ENCODE measurements at regions of chr17 and their contacts with region 1.

Region 1: DNA sequence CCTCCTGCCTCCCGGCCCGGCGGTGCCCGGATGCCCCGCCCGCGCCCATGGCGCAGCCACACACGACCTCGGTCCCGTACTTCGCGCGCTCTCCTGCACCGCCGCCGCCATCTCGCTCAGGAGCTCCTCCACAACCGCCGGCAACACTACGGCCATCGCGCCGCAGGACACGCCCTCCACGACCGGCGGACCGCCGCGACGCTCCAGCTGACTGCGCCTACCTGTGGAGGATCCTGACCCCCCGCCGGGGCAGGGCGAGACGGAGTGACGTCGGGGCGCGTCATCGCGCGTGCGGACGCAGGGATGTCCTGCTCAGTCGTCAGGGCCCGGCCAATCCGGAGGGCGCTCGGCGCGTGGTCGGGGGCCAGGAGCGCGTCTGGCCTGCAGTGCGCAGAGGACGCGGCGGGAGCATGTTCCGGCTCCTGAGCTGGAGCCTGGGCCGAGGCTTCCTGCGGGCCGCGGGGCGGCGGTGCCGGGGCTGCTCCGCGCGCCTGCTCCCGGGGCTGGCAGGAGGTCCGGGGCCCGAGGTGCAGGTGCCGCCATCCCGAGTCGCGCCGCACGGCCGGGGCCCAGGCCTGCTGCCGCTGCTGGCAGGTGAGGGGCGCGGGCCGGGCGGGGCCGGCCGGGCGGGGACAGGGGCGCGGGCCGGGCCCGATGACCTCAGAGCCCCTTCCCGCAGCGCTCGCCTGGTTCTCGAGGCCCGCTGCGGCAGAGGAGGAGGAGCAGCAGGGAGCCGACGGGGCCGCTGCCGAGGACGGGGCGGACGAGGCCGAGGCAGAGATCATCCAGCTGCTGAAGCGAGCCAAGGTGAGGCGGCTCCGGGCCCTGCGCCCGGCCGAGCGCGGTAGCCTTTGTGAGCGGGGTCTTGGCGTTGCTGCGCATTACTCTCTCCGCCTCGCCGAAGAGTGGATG is at the starts of genes TTC19 and ZSWIM7:
- DNase-seq: peak; percentile 94 to 100 (median 98)

Region 2: DNA sequence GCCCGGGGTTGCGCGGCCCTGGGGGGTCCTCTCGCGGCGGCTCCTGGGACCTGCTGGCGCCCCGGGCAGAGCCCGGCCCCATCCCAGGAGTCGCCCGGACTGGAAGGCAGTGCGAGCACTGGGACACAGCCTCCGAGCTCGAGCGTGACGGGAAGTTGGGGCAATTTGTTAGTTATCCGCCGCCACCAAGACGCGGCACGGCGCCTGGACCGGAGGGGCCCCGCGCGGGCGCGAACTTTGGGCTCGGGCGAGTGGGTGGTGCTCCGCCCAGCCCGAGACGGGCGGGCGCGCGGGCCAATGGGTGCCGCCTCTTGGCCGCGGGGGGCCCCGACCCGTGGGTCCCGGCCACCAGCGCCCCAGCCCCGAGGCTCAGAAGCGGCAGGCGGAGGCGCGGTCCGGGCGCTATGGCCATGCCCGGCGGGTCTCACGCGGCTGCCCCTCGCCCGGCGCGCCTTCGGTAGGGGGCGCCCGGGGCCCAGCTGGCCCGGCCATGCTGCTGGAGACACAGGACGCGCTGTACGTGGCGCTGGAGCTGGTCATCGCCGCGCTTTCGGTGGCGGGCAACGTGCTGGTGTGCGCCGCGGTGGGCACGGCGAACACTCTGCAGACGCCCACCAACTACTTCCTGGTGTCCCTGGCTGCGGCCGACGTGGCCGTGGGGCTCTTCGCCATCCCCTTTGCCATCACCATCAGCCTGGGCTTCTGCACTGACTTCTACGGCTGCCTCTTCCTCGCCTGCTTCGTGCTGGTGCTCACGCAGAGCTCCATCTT is 54.8 kb before region 1 on chr17 and contains the start of gene ADORA2B:
- intact Hi-C with region 1: loop called (anchors 2 kb)
- DNase-seq: peak in 9 of 10 donors; percentile 19 to 93 (median 50)

Region 3: DNA sequence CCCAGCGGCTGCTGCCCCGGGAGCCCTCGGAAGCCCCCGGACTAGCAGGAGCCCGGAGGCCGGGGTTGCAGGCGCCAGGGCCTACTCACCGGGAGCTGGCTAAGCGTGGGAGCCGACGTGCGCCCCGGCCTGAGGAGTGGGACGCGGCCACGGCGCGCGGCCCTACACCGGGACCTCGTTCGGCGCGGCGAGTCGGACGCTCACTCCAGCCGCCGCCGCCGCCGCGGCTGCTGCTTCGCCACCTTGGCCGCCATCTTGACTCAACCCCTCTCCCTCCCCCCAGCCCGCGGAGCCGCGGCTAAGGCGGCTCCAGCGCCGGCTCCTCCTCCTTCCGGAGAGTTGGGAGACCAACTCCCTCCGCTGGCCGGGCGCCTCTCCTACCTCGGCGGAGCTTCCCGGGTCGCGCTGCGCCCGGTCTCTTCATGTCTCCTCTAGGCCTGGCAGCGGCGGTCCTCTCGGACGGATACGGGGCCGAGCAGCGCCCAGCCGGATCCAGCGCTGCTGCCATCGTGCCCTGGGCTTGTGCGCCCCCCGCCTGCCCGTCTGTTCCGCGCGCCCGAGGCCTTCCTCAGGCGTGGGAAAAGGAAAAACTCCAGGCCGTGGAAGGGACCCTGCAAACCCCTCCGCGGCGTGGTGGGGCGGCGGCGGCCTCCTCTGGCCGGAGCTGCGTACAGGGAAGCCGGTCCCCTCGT is 215.7 kb after region 1 on chr17 and contains the start of gene NCOR1:
- intact Hi-C with region 1: loop called (anchors 2 kb)
- DNase-seq: peak; percentile 82 to 98 (median 90)